Activated naive CD4-positive, alpha-beta T cell treated with anti-CD3 and anti-CD28 coated beads for 36 hours (primary cell): ENCODE measurements at regions of chr4 and their contacts with region 1.

Region 1: GRCh38 chr4:40309250-40309774 is 25.8 kb upstream of the CHRNA9 start:
- DNase-seq: peak; percentile 97
- H3K4me3 Mint-ChIP-seq: peak overlapping the region; percentile 71
- H3K27ac Mint-ChIP-seq: peak overlapping the region; percentile 97
- H3K4me1 Mint-ChIP-seq: peaks cover 89% of the 10 kb centered on the region
- H3K27me3 Mint-ChIP-seq: no peaks in the 10 kb centered on the region

Region 2: GRCh38 chr4:39527273-39528060 is 781.8 kb before region 1 on chr4 and contains the start of gene UGDH:
- CTCF ChIA-PET with region 1: no interaction called
- intact Hi-C with region 1: loop called (anchors 10 kb)
- DNase-seq: peak; percentile 91
- H3K4me3 Mint-ChIP-seq: peak within 1 kb of the TSS; percentile 97
- H3K27ac Mint-ChIP-seq: peak within 1 kb of the TSS; percentile 81
- H3K4me1 Mint-ChIP-seq: peaks cover 18% of the 10 kb centered on the region
- H3K27me3 Mint-ChIP-seq: no peaks in the 10 kb centered on the region
- total RNA-seq, gene UGDH: 11.7 to 14.6 TPM

Region 3: DNA sequence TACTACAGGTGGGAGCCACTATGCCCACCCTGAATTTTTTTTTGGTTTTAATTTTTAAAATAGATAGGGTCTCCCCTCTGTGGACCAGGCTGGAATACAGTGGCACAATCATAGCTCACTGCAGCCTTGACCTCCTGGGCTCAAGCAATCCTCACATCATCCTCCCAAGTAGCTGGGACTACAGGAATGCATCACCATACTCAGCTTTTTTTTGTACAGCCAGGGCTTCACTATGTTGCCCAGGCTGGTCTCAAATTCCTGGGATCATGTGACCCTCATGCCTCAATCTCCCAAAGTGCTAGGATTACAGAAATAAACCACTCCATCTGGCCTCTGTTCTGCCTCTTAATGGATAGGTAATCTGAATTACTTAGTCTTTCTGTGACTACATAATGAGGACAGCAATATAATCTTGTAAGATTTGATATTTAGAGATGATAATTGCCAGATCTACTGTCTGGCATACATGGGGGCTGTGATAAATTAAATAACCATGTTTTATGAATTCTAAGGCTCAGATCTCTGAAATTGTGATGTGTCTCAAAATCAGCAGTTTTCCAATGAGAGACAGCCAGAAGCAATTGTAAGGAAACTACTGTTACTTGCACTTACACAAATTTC is 358.3 kb before region 1 on chr4:
- CTCF ChIA-PET with region 1: no interaction called
- intact Hi-C with region 1: no loop called
- DNase-seq: no peak
- H3K4me3 Mint-ChIP-seq: no peak overlapping the region
- H3K27ac Mint-ChIP-seq: peak overlapping the region; percentile 26
- H3K4me1 Mint-ChIP-seq: peaks cover 63% of the 10 kb centered on the region
- H3K27me3 Mint-ChIP-seq: no peaks in the 10 kb centered on the region

Region 4: GRCh38 chr4:40056716-40057585 is 252.4 kb before region 1 on chr4 and contains the start of gene N4BP2:
- CTCF ChIA-PET with region 1: interaction called, 8 read pairs
- intact Hi-C with region 1: loop called (anchors 1 kb)
- DNase-seq: peak; percentile 71
- H3K4me3 Mint-ChIP-seq: peak within 1 kb of the TSS; percentile 93
- H3K27ac Mint-ChIP-seq: peak within 1 kb of the TSS; percentile 95
- H3K4me1 Mint-ChIP-seq: peaks cover 30% of the 10 kb centered on the region
- H3K27me3 Mint-ChIP-seq: no peaks in the 10 kb centered on the region
- total RNA-seq, gene N4BP2: 17.5 to 18.8 TPM

Region 5: GRCh38 chr4:40228497-40229365 is 80.6 kb before region 1 on chr4:
- CTCF ChIA-PET with region 1: interaction called, 36 read pairs
- intact Hi-C with region 1: loop called (anchors 1 kb)
- DNase-seq: peak; percentile 24
- H3K4me3 Mint-ChIP-seq: peak overlapping the region; percentile 53
- H3K27ac Mint-ChIP-seq: peak overlapping the region; percentile 85
- H3K4me1 Mint-ChIP-seq: peaks cover 94% of the 10 kb centered on the region
- H3K27me3 Mint-ChIP-seq: no peaks in the 10 kb centered on the region

Region 6: DNA sequence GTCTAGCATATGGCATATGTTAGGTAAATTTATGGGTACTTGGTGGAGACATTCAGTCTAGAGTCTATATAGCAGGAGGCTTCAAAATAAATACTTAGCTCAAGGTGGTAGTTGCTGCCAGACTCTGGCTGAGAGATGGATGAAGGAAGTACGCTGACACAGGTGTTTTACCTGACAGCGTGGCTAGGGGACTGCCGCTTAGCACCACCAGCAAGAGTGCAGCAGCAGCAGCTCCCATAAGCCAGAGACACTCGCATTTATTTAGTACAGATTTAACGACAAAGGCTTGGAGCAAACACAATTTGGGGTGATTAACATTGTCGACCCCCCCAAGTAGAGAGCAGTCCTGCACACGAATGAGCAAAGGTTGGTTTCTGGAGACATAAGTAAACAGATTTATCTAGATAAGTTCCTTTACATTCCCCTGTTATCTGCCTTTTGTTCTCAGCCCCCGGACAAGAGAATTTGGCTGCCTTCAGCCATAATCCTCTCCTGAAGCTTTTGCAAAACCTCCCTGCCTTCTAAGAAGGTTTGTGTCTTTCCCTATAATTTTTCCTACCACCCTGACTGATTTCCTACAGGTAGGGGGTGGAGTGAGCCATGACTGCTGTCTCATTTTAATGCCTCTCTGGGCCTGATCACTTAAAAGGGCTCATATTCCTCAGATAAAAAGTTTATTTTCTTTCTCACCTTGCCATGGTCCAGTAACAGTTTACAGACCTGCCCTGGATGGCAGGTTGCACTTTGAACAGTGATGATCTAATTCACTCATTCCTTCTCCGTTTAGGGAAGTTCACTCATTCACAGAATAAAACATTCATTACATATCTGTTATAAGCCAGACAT is 47.9 kb before region 1 on chr4:
- CTCF ChIA-PET with region 1: interaction called, 23 read pairs
- intact Hi-C with region 1: loop called (anchors 1 kb)
- DNase-seq: no peak
- H3K4me3 Mint-ChIP-seq: no peak overlapping the region
- H3K27ac Mint-ChIP-seq: peak overlapping the region; percentile 74
- H3K4me1 Mint-ChIP-seq: peaks cover 81% of the 10 kb centered on the region
- H3K27me3 Mint-ChIP-seq: no peaks in the 10 kb centered on the region

Region 7: DNA sequence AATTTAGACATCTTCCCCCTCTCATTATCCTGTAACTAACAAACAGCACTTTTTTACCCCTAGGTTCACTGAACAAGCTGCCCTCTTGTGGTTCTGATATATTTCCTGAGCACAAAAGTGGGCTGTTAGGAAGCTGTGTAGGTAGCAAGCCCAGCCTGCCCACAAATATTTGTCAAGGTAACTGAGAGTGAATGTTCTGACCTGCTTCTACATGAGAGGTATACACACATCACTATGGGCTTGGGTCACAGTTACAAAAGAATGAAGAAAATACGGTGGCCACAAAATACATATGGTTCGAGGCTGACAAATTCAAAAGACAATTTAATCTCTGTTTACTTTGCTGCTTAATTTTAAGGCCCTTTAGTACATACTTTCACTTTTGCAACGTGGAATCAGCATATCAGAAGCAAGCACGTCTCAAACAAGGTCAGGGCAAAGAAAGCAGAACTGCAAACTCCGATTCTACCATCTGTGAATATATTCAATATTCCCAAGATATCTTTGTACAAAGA is 241.7 kb after region 1 on chr4:
- CTCF ChIA-PET with region 1: no interaction called
- intact Hi-C with region 1: loop called (anchors 2 kb)
- DNase-seq: peak; percentile 34
- H3K4me3 Mint-ChIP-seq: peak overlapping the region; percentile 60
- H3K27ac Mint-ChIP-seq: peak overlapping the region; percentile 55
- H3K4me1 Mint-ChIP-seq: peaks cover 28% of the 10 kb centered on the region
- H3K27me3 Mint-ChIP-seq: no peaks in the 10 kb centered on the region